ENCODE measurements at regions of chr17 and their contacts with region 1.

Region 1: GRCh38 chr17:28896884-28897768 is at the start of gene FLOT2:
- DNase-seq: peak; percentile 37 to 86 (median 75)
- ATAC-seq: peak; percentile 78
- H3K4me3 ChIP-seq: peak within 1 kb of the TSS; percentile 77 to 81
- H3K4me3 Mint-ChIP-seq: peak within 1 kb of the TSS; percentile 96
- H3K27ac ChIP-seq: peak within 1 kb of the TSS; percentile 85 to 88
- H3K27ac Mint-ChIP-seq: peak within 1 kb of the TSS; percentile 96
- H3K4me1 ChIP-seq: peaks cover 63% of the 10 kb centered on the region
- H3K4me1 Mint-ChIP-seq: peaks cover 62% of the 10 kb centered on the region
- H3K27me3 ChIP-seq: no peaks in the 10 kb centered on the region
- H3K27me3 Mint-ChIP-seq: no peaks in the 10 kb centered on the region
- CTCF ChIP-seq: peak; percentile 43
- total RNA-seq, gene FLOT2: 69.7 to 71.6 TPM

Region 2: GRCh38 chr17:28384281-28385036 is 512.7 kb before region 1 on chr17:
- CTCF ChIA-PET with region 1: no interaction called
- POLR2A ChIA-PET with region 1: no interaction called
- intact Hi-C with region 1: no loop called
- DNase-seq: peak; percentile 21 to 77 (median 65)
- ATAC-seq: peak; percentile 93
- H3K4me3 ChIP-seq: peak overlapping the region; percentile 75 to 83
- H3K4me3 Mint-ChIP-seq: peak overlapping the region; percentile 92
- H3K27ac ChIP-seq: peak overlapping the region; percentile 7 to 46
- H3K27ac Mint-ChIP-seq: peak overlapping the region; percentile 52
- H3K4me1 ChIP-seq: peaks cover 25% of the 10 kb centered on the region
- H3K4me1 Mint-ChIP-seq: peaks cover 27% of the 10 kb centered on the region
- H3K27me3 ChIP-seq: no peaks in the 10 kb centered on the region
- H3K27me3 Mint-ChIP-seq: peaks cover 6% of the 10 kb centered on the region
- CTCF ChIP-seq: no peak

Region 3: DNA sequence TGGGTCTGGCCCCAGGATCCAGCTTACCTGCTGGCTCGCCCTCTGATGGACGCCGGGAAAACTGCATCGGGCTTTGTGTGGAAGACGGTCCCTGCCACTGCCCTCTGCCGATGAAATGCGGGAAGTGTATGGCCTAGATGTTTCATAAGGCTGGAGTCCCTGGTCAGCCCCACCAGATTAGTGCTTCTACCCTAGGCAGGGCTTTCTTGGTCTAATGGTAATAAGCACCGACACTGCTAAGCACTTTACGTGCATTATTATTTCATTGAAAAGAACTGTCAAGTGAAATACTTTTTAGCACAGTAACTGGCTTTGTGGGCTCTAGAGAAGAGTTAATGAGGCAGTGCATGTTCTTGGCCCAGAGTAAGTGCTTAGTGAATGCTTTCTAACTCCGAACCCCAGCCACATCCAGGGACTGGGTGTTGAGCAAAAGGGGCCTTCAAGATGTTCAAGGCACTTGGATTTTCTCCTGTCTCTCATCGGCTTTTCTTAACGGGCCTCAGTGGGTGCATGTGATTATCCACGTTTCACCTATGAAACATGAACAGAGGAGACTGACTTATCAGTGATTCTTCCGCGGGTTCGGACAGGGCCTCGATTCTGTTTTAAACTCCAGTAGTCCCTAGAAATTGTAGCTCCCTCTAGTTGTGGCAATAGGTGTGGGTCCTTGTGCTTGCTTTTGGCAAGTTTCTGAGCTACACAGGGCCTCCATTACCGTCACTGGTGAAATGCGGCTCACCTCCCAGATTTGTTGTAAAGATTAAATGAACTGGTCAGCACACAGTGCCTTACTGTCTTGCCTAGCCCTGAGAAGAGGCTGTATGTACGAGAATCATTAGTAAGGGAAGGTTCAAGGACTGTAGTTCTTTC is 146.7 kb before region 1 on chr17:
- CTCF ChIA-PET with region 1: interaction called, 10 read pairs
- POLR2A ChIA-PET with region 1: no interaction called
- intact Hi-C with region 1: no loop called
- DNase-seq: peak; percentile 69 to 93 (median 89)
- ATAC-seq: peak; percentile 93
- H3K4me3 ChIP-seq: no peak overlapping the region
- H3K4me3 Mint-ChIP-seq: no peak overlapping the region
- H3K27ac ChIP-seq: no peak overlapping the region
- H3K27ac Mint-ChIP-seq: no peak overlapping the region
- H3K4me1 ChIP-seq: peaks cover 15% of the 10 kb centered on the region
- H3K4me1 Mint-ChIP-seq: peaks cover 16% of the 10 kb centered on the region
- H3K27me3 ChIP-seq: no peaks in the 10 kb centered on the region
- H3K27me3 Mint-ChIP-seq: no peaks in the 10 kb centered on the region
- CTCF ChIP-seq: peak; percentile 99

Region 4: DNA sequence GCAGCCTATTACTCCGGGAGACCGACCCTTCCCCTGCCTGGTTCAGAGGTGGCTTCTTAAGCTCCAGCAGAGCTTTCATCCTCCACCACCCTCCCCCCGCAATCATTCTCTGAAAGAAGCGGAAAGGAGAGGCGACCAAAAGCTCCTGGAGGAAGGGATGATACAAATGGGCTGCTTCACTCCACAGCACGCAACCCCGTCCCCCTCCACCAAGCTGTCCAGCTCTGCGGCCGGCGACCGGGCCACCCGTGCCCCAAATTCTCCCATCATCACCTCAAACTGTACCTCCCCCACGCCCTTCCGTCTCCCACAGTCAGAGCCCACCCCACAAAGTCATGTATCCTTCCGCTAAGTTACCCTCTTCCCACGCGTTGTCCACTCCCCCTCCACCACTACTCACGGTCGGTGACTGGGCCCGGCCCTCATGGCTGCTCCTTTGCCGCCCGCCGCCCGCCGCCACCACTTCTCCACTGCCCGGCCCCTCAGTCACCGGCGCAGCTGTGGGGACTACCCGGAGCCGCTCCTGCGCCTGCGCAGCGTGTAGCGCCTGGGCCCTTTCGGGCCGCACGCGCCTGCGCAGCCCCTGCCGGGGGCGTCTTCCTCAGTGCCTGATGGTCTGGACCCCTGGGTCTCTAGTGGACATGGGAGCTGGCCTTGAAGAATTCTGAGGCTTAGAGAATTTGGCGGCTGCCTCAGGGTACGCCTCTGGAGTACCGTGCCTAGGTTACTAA is 54.7 kb before region 1 on chr17 and contains the start of gene FAM222B:
- CTCF ChIA-PET with region 1: interaction called, 8 read pairs
- POLR2A ChIA-PET with region 1: interaction called, 11 read pairs
- intact Hi-C with region 1: no loop called
- DNase-seq: peak; percentile 68 to 94 (median 83)
- ATAC-seq: peak; percentile 98
- H3K4me3 ChIP-seq: peak within 1 kb of the TSS; percentile 62 to 91
- H3K4me3 Mint-ChIP-seq: peak within 1 kb of the TSS; percentile 97
- H3K27ac ChIP-seq: peak within 1 kb of the TSS; percentile 65 to 79
- H3K27ac Mint-ChIP-seq: peak within 1 kb of the TSS; percentile 94
- H3K4me1 ChIP-seq: peaks cover 16% of the 10 kb centered on the region
- H3K4me1 Mint-ChIP-seq: peaks cover 25% of the 10 kb centered on the region
- H3K27me3 ChIP-seq: no peaks in the 10 kb centered on the region
- H3K27me3 Mint-ChIP-seq: no peaks in the 10 kb centered on the region
- CTCF ChIP-seq: no peak
- total RNA-seq, gene FAM222B: 20.2 to 20.6 TPM

Region 5: DNA sequence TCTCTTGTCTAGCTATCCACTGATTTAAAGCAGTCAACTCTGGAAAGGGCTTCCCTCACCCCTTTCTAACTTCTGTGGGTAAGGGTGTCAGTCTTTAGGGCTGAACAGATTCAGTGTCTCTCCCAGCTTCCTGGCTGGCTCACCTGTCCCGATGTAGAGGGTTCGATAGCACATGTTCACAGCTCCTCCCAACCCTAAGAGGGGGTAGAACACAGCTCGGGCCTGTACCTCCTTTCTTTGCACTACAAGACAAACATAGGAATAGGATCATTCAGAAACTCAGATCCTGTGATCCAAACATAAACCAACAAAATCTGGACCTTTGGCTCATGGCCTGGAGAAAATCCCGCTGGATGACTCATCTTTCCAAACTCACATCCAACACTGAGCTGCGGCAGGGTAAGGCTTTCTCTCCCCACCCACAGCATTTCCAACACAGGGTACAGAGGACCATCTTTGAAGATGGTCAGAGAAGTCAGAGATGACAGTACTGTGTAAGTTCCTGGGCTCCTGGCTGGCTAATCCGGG is 11.6 kb after region 1 on chr17:
- CTCF ChIA-PET with region 1: interaction called, 13 read pairs
- POLR2A ChIA-PET with region 1: interaction called, 5 read pairs
- intact Hi-C with region 1: no loop called
- DNase-seq: no peak
- ATAC-seq: no peak
- H3K4me3 ChIP-seq: no peak overlapping the region
- H3K4me3 Mint-ChIP-seq: no peak overlapping the region
- H3K27ac ChIP-seq: no peak overlapping the region
- H3K27ac Mint-ChIP-seq: no peak overlapping the region
- H3K4me1 ChIP-seq: no peaks in the 10 kb centered on the region
- H3K4me1 Mint-ChIP-seq: peaks cover 1% of the 10 kb centered on the region
- H3K27me3 ChIP-seq: no peaks in the 10 kb centered on the region
- H3K27me3 Mint-ChIP-seq: no peaks in the 10 kb centered on the region
- CTCF ChIP-seq: no peak